ENCODE measurements at regions of chr12 and their contacts with region 1.

Region 1: DNA sequence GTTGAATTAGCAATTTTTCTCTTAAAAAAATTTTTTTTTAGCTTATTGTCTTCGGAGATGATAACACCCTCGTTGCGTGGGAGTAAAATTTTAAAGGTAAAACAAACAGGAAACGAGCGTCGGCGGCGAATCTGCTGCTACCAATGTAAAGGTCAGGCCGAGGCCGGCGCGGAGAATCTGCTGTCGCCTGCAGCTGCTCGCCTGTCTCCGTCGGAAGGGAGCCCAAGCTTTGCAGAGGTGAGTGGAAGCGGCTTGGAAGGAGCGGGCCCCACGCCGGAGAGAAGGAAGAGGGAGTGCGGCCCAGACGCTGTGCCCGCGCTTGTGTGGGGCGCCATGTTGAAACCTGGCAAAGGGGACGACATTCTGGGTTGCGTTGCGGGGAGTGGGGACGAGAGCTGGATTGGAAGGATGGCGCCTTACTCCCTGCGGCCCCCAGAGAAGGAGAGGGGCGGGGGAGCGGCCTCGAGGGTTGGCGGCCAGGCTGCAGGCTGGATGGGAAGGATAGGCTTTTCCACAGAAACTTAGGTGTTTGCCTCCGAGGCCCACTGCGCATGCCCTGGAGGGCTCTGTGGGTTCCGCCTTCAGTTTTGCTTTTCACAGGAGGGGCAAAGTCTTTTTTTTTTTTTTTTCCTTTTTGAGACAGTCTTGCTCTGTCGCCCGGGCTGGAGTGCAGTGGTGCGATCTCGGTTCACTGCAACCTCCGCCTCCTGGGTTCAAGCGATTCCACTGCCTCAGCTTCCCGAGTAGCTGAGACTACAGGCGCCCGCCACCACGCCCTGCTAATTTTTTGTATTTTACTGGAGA is at the start of gene SNRNP35:
- DNase-seq: peak; percentile 81
- H3K4me3 Mint-ChIP-seq: peak within 1 kb of the TSS; percentile 97
- H3K27ac Mint-ChIP-seq: peak within 1 kb of the TSS; percentile 99
- H3K4me1 Mint-ChIP-seq: peaks cover 14% of the 10 kb centered on the region
- H3K27me3 Mint-ChIP-seq: no peaks in the 10 kb centered on the region
- CTCF ChIP-seq: no peak
- total RNA-seq, gene SNRNP35: 18.0 and 24.7 TPM in 2 replicates

Region 2: DNA sequence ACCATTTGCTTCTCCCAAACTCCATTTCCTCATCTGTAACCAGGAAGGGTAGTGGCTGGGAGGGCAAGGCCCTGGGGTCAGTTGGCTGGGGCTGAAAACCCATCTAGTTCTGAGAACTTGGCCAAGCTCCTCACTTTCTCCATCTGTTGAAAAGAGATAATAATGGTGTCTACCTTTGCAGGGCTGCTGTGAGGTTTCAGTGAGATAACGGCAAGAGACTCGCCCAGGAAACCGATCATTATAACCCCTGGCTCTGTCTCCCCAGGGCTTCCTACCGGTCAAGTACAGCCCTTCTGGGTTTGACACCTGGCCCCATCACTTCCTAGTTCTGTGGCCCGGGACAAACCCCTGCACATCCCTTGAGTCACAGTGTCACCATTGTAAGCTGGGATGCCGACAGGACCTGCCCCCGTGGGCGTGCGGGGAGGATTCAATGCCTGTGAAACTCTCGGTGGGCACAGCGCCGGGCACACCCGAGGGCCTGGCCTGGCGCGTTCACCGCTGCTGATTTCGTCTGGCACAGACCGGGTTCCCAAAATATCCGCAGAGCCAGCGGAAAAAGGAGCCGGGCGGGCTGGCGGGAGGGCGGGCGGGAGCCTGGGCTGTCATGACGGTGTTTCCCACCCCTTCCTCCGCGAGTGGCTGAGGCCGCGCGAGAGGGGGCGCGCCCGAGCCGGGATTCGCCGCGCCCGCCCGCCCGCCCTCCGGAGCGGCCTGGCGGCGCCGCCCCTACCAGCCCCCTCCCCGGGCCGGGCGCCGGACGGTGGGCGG is 69.8 kb before region 1 on chr12:
- CTCF ChIA-PET with region 1: no interaction called
- POLR2A ChIA-PET with region 1: interaction called, 21 read pairs
- intact Hi-C with region 1: no loop called
- DNase-seq: peak; percentile 71
- H3K4me3 Mint-ChIP-seq: peak overlapping the region; percentile 68
- H3K27ac Mint-ChIP-seq: no peak overlapping the region
- H3K4me1 Mint-ChIP-seq: peaks cover 21% of the 10 kb centered on the region
- H3K27me3 Mint-ChIP-seq: no peaks in the 10 kb centered on the region
- CTCF ChIP-seq: no peak

Region 3: GRCh38 chr12:123519141-123520001 is 61.2 kb after region 1 on chr12:
- CTCF ChIA-PET with region 1: no interaction called
- POLR2A ChIA-PET with region 1: interaction called, 23 read pairs
- intact Hi-C with region 1: no loop called
- DNase-seq: peak; percentile 94
- H3K4me3 Mint-ChIP-seq: peak overlapping the region; percentile 64
- H3K27ac Mint-ChIP-seq: peak overlapping the region; percentile 99
- H3K4me1 Mint-ChIP-seq: peaks cover 19% of the 10 kb centered on the region
- H3K27me3 Mint-ChIP-seq: no peaks in the 10 kb centered on the region
- CTCF ChIP-seq: no peak